Activated CD4-positive, alpha-beta T cell treated with anti-CD3 and anti-CD28 coated beads for 36 hours (primary cell): ENCODE measurements at regions of chr1 and their contacts with region 1.

Region 1: GRCh38 chr1:8903908-8904650 is 25.6 kb upstream of the ENO1 start:
- DNase-seq: no peak
- ATAC-seq: no peak
- H3K4me3 Mint-ChIP-seq: no peak overlapping the region
- H3K27ac Mint-ChIP-seq: peak overlapping the region; percentile 48
- H3K4me1 Mint-ChIP-seq: peaks cover 46% of the 10 kb centered on the region
- H3K27me3 Mint-ChIP-seq: no peaks in the 10 kb centered on the region

Region 2: DNA sequence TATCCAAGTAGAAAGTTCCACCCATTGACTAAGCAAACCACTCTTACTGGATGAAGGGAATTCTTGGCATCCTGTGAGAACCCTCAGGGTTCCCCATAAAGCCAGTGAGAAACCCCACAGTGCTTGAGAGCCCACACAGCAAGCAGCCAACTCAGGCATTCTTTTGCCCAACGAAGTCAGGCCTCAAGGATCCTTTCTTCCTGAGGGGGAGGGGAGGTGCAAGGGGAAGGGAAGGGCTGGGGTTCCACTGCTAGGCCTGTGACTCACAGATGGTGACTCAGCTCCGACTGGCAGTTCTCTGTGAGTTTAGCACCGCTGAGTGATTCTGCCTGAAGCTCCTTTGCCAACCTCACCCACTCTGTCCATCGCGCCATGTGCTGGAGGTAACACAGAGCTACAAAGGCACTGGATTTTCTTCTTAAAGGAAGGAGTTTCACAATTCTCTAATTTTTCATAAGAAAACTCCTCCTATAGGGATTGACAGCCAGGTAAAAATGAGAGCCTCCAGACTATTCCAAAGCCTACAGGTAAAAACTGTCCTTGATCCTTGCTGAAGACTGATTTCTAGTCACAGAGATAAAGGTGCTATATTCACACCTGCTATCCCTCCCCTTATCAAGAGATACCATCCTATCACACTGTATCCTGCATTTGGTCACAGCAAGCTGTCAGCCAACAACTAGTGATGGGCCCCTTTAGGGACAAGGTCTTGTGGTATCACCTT is 30.4 kb before region 1 on chr1:
- CTCF ChIA-PET with region 1: interaction called, 6 read pairs
- POLR2A ChIA-PET with region 1: interaction called, 10 read pairs
- intact Hi-C with region 1: loop called (anchors 1 kb)
- DNase-seq: peak; percentile 92
- ATAC-seq: peak; percentile 68
- H3K4me3 Mint-ChIP-seq: peak overlapping the region; percentile 90
- H3K27ac Mint-ChIP-seq: peak overlapping the region; percentile 99
- H3K4me1 Mint-ChIP-seq: peaks cover 69% of the 10 kb centered on the region
- H3K27me3 Mint-ChIP-seq: no peaks in the 10 kb centered on the region

Region 3: DNA sequence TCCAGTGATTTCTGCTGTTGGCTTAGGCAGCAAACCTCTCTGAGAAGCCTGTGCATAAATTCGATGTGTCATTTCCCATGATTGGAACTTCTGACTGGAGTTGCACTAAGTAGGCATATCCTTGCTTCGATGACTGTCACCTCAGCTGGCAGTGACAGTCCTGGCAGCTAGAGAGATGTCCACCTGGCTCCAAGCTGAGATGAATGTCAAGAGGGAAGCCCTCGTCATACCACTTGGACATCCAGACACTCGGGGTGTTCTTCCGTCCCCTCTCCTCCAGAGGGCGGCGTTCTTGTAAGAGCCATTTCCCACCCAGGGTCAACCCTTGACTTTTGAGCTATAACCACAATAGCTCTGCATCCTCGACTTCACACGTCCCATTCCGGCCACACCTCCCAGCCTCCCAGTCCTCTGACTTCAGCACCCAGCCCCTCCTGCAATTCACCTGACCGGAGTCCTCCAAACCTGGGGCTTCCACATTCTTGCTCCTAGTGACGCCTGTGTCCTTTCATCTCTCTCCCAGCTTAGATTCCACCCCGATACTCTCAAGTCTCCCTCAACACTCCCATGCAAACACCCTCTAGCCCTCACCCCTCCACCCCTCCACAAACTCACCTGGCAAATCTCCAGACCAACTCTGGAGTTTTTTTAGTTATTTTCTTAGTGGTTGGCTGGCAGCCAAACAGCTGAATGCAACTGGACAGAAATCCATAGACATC is 58.9 kb after region 1 on chr1:
- CTCF ChIA-PET with region 1: interaction called, 6 read pairs
- POLR2A ChIA-PET with region 1: no interaction called
- intact Hi-C with region 1: loop called in 1 of 2 experiments (anchors 1 kb)
- DNase-seq: peak; percentile 67
- ATAC-seq: peak; percentile 57
- H3K4me3 Mint-ChIP-seq: no peak overlapping the region
- H3K27ac Mint-ChIP-seq: peak overlapping the region; percentile 27
- H3K4me1 Mint-ChIP-seq: peaks cover 47% of the 10 kb centered on the region
- H3K27me3 Mint-ChIP-seq: no peaks in the 10 kb centered on the region

Region 4: DNA sequence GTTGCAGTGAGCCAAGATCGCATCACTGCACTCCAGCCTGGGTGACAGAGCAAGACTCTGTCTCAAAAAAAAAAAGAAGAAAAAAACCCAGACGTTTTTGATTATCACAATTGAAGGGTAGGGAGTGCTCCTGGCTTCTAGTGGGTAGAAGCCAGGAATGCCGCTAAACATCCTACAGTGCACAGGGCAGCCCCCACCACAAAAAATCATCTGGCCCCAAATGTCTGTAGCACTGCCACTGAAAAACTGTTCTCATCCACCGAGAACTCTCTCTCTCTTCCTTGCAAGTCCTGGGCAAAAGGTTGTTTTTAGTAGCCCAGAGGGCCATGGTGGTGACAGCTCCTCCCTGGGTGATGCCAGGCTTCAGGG is 260.4 kb after region 1 on chr1:
- CTCF ChIA-PET with region 1: no interaction called
- POLR2A ChIA-PET with region 1: no interaction called
- intact Hi-C with region 1: no loop called
- DNase-seq: no peak
- ATAC-seq: no peak
- H3K4me3 Mint-ChIP-seq: no peak overlapping the region
- H3K27ac Mint-ChIP-seq: no peak overlapping the region
- H3K4me1 Mint-ChIP-seq: peaks cover 12% of the 10 kb centered on the region
- H3K27me3 Mint-ChIP-seq: peaks cover 4% of the 10 kb centered on the region

Region 5: DNA sequence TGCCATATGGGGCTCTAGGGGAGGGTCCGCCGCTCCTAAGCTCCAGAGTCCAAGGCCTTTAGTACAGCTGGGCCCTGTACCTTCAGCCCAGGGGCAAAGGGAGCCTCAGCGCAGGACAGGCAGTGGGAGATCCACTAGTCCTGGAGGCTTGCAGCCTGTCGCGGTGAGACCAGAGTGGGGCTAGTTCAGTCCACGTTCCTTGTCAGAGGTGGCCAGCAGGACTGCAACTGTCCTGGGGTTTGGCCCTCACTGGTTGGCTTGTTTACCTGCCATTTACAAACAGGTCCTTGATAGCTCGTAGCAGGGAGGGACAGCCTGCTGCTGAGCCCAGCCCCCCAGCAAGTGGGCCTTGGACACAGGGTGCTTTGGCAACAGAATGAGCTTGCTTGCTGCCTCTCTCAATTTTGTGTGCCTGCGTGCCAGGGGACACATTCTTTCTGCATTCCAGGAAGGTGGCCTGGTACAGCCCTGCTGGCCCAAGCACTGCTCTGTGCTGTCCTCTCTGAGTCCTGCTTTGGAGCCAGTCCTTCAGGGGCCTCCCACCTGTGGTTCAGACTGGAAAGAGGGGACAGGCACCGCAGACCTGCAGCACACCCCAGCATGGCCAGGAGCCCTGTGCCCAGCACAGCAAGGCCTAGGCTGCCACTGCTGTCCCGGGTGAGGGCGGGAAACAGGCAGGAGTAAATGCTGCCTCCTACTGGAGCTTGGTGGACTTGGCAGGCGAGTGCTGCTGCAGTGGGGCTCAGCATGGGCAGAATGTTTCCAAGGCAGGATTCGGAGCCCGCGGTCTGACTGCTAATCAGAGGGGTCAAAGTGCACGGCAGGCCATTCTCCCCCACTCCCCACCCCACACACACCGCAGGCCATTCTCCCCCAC is 345.7 kb after region 1 on chr1:
- CTCF ChIA-PET with region 1: no interaction called
- POLR2A ChIA-PET with region 1: no interaction called
- intact Hi-C with region 1: no loop called
- DNase-seq: peak; percentile 68
- ATAC-seq: peak; percentile 79
- H3K4me3 Mint-ChIP-seq: no peak overlapping the region
- H3K27ac Mint-ChIP-seq: no peak overlapping the region
- H3K4me1 Mint-ChIP-seq: peaks cover 6% of the 10 kb centered on the region
- H3K27me3 Mint-ChIP-seq: no peaks in the 10 kb centered on the region